Activated T-helper 1 cell treated with anti-CD3 and anti-CD28 coated beads, Interleukin-12 subunit alpha, Interleukin-12 subunit beta, Interleukin-2, Interleukin-4 antibody, amounts not matched to agents 30 ng/mL and 10 ng/mL and 1 ng/mL, durations not matched to agents 14 hours and 24 hours and 36 hours (primary cell): ENCODE measurements at regions of chr11 and their contacts with region 1.

Region 1: GRCh38 chr11:92692826-92693546 is 276.5 kb upstream of the MTNR1B start:
- DNase-seq: no peak
- H3K4me3 Mint-ChIP-seq: no peak overlapping the region
- H3K27ac Mint-ChIP-seq: no peak overlapping the region
- H3K4me1 Mint-ChIP-seq: no peaks in the 10 kb centered on the region
- H3K27me3 Mint-ChIP-seq: no peaks in the 10 kb centered on the region

Region 2: GRCh38 chr11:92667486-92668152 is 25.4 kb before region 1 on chr11:
- intact Hi-C with region 1: no loop called
- DNase-seq: no peak
- H3K4me3 Mint-ChIP-seq: no peak overlapping the region
- H3K27ac Mint-ChIP-seq: no peak overlapping the region
- H3K4me1 Mint-ChIP-seq: no peaks in the 10 kb centered on the region
- H3K27me3 Mint-ChIP-seq: no peaks in the 10 kb centered on the region

Region 3: DNA sequence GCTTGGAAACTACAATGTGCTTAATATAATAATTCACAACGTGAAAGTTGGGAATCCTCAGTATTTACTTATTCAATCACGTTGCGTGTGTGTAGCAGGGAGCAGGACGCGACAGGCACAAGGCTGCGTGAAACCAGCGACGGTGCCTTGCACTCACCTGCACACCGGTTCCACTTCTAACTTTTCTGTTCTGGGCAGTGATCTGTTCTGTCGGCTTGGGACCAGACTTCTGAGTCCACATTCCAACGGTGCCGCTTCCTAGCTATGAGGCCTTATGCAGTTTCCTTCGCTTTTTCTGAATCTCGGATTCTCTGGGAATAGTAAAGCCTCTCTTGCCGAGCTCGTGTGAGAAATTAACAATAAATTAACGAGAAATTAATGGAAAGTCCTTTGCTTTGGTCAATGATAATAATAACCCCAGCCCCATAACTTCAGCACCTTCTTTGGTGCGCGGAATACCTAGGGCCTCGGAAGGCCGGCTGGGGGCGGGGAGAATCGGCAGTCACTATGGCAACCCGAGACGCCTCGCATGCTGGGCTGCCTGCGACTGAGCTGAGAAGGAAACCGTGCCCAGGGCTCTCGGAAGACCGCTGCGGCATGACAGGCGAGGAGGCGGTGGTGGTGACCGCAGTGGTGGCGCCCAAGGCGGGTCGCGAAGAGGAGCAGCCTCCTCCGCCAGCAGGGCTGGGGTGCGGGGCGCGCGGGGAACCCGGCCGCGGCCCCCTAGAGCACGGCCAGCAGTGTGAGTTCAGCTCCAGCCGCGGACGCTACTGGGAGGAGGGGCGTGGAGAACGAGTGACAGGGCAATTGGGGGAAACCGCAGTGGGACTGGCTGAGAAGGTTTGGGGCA is 1819.2 kb after region 1 on chr11 and contains the start of gene C11orf97:
- intact Hi-C with region 1: loop called (anchors 5 kb)
- DNase-seq: peak; percentile 34
- H3K4me3 Mint-ChIP-seq: peak within 1 kb of the TSS; percentile 40
- H3K27ac Mint-ChIP-seq: no peak within 1 kb of the TSS
- H3K4me1 Mint-ChIP-seq: peaks cover 16% of the 10 kb centered on the region
- H3K27me3 Mint-ChIP-seq: peaks cover 55% of the 10 kb centered on the region
- total RNA-seq, gene C11orf97: not detected in 2 replicates